ENCODE measurements at regions of chr9 and their contacts with region 1.

Region 1: DNA sequence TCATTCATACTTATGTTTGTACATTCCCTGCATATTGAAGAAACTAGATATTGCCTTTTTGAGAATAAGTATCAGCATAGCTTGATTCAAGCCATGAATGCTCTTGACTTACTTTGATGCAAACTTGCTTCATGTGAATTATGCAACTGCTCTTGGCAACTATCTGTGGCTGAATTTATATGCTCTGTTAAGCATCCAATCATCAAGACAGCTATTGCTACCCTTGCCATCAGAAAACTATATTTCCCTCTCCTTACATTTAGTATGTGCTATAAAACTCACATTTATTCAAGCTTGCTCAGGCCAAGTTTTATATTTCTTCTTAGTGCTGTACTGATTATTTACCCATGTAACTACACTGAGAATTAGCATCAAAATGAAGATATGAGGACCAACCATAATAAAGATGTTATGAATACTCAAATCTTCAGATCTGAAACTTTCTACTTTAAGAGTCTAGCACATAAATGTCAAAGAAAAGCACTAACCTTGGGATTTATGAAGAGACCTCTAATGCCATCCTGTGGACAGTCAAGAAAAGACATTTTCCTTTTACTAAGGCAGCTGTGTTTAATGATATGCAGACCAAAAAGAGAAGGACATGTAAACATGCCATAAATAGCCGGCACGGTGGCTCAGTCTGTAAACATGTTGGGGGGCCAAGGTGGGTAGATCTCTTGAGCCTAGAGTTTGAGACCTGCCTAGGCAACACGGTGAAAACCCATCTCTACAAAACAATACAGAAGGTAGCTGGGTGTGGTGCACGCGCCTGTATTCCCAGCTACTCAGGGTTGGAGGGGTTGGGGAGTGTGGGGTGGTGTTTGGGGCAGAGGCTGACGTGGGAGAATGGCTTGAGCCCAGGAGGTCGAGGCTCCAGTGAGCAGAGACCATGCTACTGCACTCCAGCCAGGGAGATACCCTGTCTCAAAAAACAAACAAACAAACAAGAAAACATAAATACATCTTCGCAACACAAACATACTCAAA is 267.0 kb upstream of the TYRP1 start:
- DNase-seq: no peak
- ATAC-seq: no peak
- H3K4me3 ChIP-seq: no peak overlapping the region
- H3K27ac ChIP-seq: no peak overlapping the region
- H3K4me1 ChIP-seq: no peaks in the 10 kb centered on the region
- H3K27me3 ChIP-seq: no peaks in the 10 kb centered on the region

Region 2: DNA sequence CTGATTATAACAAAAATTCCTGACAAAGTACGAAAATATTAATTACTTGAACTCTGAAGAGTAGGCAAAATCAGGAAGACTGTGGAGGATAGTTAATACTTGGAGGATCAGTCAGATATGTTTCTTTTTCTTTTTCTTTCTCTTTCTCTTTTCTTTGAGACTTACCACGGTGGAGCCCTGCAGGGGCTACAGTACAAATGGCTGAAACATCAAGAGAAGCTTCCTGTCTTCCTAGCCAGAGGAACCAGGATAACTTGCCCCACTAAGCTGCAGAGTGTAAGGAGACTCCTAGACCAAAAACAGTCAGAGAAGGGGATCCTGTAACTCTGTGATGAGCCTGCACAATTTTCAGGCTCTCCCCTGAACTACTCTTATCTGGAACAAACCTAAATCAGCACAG is 57.6 kb before region 1 on chr9:
- intact Hi-C with region 1: loop called in 1 of 2 experiments (anchors 10 kb)
- DNase-seq: no peak
- ATAC-seq: no peak
- H3K4me3 ChIP-seq: no peak overlapping the region
- H3K27ac ChIP-seq: no peak overlapping the region
- H3K4me1 ChIP-seq: no peaks in the 10 kb centered on the region
- H3K27me3 ChIP-seq: no peaks in the 10 kb centered on the region

Measured in aorta (tissue), 5 donors.